Activated T-helper 2 cell treated with anti-CD3 and anti-CD28 coated beads, Interferon-gamma antibody, Interleukin-2, Interleukin-4, amounts not matched to agents 10 μg/mL and 5 μg/mL and 100 μg/mL, durations not matched to agents 14 hours and 24 hours and 36 hours (primary cell): ENCODE measurements at regions of chr12 and their contacts with region 1.

Region 1: GRCh38 chr12:21657326-21658077 is at the start of gene LDHB:
- DNase-seq: peak; percentile 93
- H3K4me3 Mint-ChIP-seq: peak within 1 kb of the TSS; percentile 99
- H3K27ac Mint-ChIP-seq: peak within 1 kb of the TSS; percentile 99
- H3K4me1 Mint-ChIP-seq: peaks cover 37% of the 10 kb centered on the region
- H3K27me3 Mint-ChIP-seq: no peaks in the 10 kb centered on the region
- total RNA-seq, gene LDHB: 1,305 and 1,321 TPM in 2 replicates

Region 2: GRCh38 chr12:21438643-21439042 is 218.9 kb before region 1 on chr12:
- intact Hi-C with region 1: loop called (anchors 1 kb)
- DNase-seq: no peak
- H3K4me3 Mint-ChIP-seq: peak overlapping the region; percentile 92
- H3K27ac Mint-ChIP-seq: peak overlapping the region; percentile 93
- H3K4me1 Mint-ChIP-seq: peaks cover 39% of the 10 kb centered on the region
- H3K27me3 Mint-ChIP-seq: no peaks in the 10 kb centered on the region

Region 3: DNA sequence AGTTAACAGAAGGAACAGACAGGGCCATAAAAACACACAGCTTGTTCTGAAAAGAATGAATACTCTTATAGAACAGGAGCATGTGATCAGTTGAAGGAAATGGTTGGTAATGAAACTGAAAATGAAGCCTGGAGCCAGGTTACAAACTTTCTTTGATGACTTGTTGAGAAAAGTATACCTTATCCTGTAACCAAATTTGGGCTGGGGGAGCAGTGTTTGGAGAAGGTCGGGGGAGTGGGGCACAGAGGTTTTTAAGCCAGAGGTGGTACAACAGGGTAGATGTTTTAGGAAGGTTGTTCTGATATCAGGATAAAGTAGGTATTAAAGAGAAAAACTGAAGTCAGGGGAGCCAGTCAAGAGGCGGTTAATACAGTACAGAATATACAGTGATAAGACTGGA is 147.7 kb before region 1 on chr12:
- intact Hi-C with region 1: no loop called
- DNase-seq: no peak
- H3K4me3 Mint-ChIP-seq: peak overlapping the region; percentile 72
- H3K27ac Mint-ChIP-seq: peak overlapping the region; percentile 90
- H3K4me1 Mint-ChIP-seq: peaks cover 36% of the 10 kb centered on the region
- H3K27me3 Mint-ChIP-seq: no peaks in the 10 kb centered on the region

Region 4: GRCh38 chr12:21613931-21614330 is 43.6 kb before region 1 on chr12:
- intact Hi-C with region 1: loop called (anchors 1 kb)
- DNase-seq: no peak
- H3K4me3 Mint-ChIP-seq: no peak overlapping the region
- H3K27ac Mint-ChIP-seq: no peak overlapping the region
- H3K4me1 Mint-ChIP-seq: peaks cover 40% of the 10 kb centered on the region
- H3K27me3 Mint-ChIP-seq: no peaks in the 10 kb centered on the region

Region 5: GRCh38 chr12:21697904-21698630 is 40.6 kb after region 1 on chr12:
- intact Hi-C with region 1: no loop called
- DNase-seq: no peak
- H3K4me3 Mint-ChIP-seq: no peak overlapping the region
- H3K27ac Mint-ChIP-seq: no peak overlapping the region
- H3K4me1 Mint-ChIP-seq: peaks cover 6% of the 10 kb centered on the region
- H3K27me3 Mint-ChIP-seq: peaks cover 5% of the 10 kb centered on the region

Region 6: GRCh38 chr12:21771311-21771710 is 113.8 kb after region 1 on chr12:
- intact Hi-C with region 1: no loop called
- DNase-seq: no peak
- H3K4me3 Mint-ChIP-seq: no peak overlapping the region
- H3K27ac Mint-ChIP-seq: no peak overlapping the region
- H3K4me1 Mint-ChIP-seq: peaks cover 2% of the 10 kb centered on the region
- H3K27me3 Mint-ChIP-seq: peaks cover 52% of the 10 kb centered on the region

Region 7: GRCh38 chr12:22046090-22046967 is 388.8 kb after region 1 on chr12 and contains the start of gene CMAS:
- intact Hi-C with region 1: loop called (anchors 2 kb)
- DNase-seq: peak; percentile 64
- H3K4me3 Mint-ChIP-seq: peak within 1 kb of the TSS; percentile 95
- H3K27ac Mint-ChIP-seq: peak within 1 kb of the TSS; percentile 87
- H3K4me1 Mint-ChIP-seq: peaks cover 45% of the 10 kb centered on the region
- H3K27me3 Mint-ChIP-seq: no peaks in the 10 kb centered on the region
- total RNA-seq, gene CMAS: 36.2 and 37.7 TPM in 2 replicates